ENCODE measurements at regions of chr11 and their contacts with region 1.

Region 1: GRCh38 chr11:129639300-129639699 is 176.3 kb upstream of the TMEM45B start:
- DNase-seq: peak; percentile 76
- H3K4me3 Mint-ChIP-seq: no peak overlapping the region
- H3K27ac Mint-ChIP-seq: peak overlapping the region; percentile 98
- H3K4me1 Mint-ChIP-seq: peaks cover 74% of the 10 kb centered on the region
- H3K27me3 Mint-ChIP-seq: peaks cover 3% of the 10 kb centered on the region

Region 2: GRCh38 chr11:128725630-128726319 is 913.5 kb before region 1 on chr11:
- CTCF ChIA-PET with region 1: no interaction called
- intact Hi-C with region 1: loop called (anchors 10 kb)
- DNase-seq: peak; percentile 79
- H3K4me3 Mint-ChIP-seq: peak overlapping the region; percentile 61
- H3K27ac Mint-ChIP-seq: peak overlapping the region; percentile 84
- H3K4me1 Mint-ChIP-seq: peaks cover 98% of the 10 kb centered on the region
- H3K27me3 Mint-ChIP-seq: no peaks in the 10 kb centered on the region

Region 3: GRCh38 chr11:129279326-129280026 is 359.8 kb before region 1 on chr11:
- CTCF ChIA-PET with region 1: no interaction called
- intact Hi-C with region 1: loop called (anchors 1 kb)
- DNase-seq: peak; percentile 63
- H3K4me3 Mint-ChIP-seq: peak overlapping the region; percentile 77
- H3K27ac Mint-ChIP-seq: peak overlapping the region; percentile 85
- H3K4me1 Mint-ChIP-seq: peaks cover 35% of the 10 kb centered on the region
- H3K27me3 Mint-ChIP-seq: peaks cover 8% of the 10 kb centered on the region

Region 4: DNA sequence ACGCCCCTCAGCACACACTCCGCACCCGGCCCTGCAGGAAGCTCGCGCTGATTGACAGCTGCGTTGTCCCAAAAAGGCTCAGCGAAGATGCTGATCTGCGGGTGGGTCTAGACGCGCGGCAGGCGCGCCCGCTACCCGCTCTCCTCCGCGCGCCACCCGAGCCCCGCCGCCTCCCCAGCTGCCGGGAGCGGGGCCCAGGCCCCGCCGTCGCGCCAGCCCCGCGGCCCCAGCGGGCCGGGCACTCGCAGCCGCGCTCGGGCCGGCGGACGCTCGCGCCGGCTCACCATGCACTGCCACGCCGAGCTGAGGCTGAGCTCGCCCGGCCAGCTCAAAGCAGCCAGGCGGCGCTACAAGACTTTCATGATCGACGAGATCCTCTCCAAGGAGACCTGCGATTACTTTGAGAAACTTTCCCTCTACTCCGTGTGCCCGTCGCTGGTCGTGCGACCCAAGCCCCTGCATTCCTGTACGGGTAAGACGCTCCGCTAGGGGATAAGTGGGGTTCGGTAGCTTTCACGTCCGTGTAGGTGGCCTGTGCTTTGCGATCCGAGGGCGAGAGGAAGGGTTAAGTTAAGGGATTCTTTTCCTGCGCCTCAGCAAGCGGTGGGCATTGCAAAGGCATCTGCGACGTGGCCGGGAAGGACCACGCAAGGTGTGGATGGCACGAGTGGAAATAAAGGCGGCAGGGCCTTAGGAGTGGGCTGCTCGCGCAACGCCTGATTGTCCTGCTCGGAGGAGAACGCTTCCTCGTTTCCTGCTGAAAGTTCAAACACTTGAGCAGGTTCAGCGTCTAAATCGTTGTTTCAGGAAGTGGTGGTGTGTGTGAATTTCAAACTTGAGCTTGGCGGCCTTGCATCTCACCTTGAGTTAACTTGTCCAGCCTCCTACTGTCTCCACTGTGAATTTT is 263.3 kb before region 1 on chr11 and contains the start of gene BARX2:
- CTCF ChIA-PET with region 1: interaction called, 7 read pairs
- intact Hi-C with region 1: loop called (anchors 2 kb)
- DNase-seq: peak; percentile 77
- H3K4me3 Mint-ChIP-seq: peak within 1 kb of the TSS; percentile 71
- H3K27ac Mint-ChIP-seq: no peak within 1 kb of the TSS
- H3K4me1 Mint-ChIP-seq: peaks cover 24% of the 10 kb centered on the region
- H3K27me3 Mint-ChIP-seq: peaks cover 70% of the 10 kb centered on the region
- total RNA-seq, gene BARX2: 3.2 to 3.8 TPM

Region 5: GRCh38 chr11:129440028-129440713 is 199.1 kb before region 1 on chr11:
- CTCF ChIA-PET with region 1: interaction called, 3 read pairs
- intact Hi-C with region 1: loop called (anchors 1 kb)
- DNase-seq: peak; percentile 60
- H3K4me3 Mint-ChIP-seq: no peak overlapping the region
- H3K27ac Mint-ChIP-seq: peak overlapping the region; percentile 11
- H3K4me1 Mint-ChIP-seq: peaks cover 33% of the 10 kb centered on the region
- H3K27me3 Mint-ChIP-seq: peaks cover 23% of the 10 kb centered on the region

Region 6: GRCh38 chr11:130069684-130070108 is 430.4 kb after region 1 on chr11 and contains the start of gene APLP2:
- CTCF ChIA-PET with region 1: no interaction called
- intact Hi-C with region 1: loop called (anchors 5 kb)
- DNase-seq: peak; percentile 98
- H3K4me3 Mint-ChIP-seq: peak within 1 kb of the TSS; percentile 91
- H3K27ac Mint-ChIP-seq: peak within 1 kb of the TSS; percentile 86
- H3K4me1 Mint-ChIP-seq: peaks cover 23% of the 10 kb centered on the region
- H3K27me3 Mint-ChIP-seq: peaks cover 4% of the 10 kb centered on the region
- total RNA-seq, gene APLP2: 38.4 to 43.5 TPM

Measured in activated naive CD4-positive, alpha-beta T cell treated with anti-CD3 and anti-CD28 coated beads for 36 hours (primary cell).